Activated CD4-positive, alpha-beta T cell treated with anti-CD3 and anti-CD28 coated beads, Interleukin-2, amount 10 ng/mL, durations not matched to agents 24 days and 14 days (primary cell): ENCODE measurements at regions of chr17 and their contacts with region 1.

Region 1: DNA sequence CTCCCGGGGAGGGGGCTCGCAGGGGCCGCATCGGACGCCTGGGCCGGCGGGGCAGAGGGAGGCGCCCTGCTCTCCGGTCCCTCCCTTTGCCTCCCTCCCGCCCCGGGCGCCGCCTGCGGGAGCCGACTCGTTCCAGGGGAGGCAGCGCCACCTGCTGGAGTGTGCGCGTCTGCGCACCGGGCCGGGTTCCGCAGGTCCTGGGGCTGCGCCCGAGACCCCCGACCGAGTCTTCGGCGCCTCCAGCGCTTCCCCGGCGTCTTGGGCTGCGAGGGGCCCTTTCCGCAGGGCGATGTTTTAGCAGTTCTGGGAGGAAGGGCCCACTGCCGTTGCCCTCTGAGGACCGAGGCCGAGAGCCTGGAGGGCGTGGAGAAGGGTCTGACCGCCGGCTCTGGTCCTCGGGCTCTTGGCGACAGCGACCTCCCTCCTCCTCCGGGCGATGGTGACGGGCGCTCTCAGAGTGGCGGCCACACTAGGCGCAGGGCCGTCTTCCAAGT is 106.3 kb downstream of the SEC14L1 start:
- DNase-seq: peak; percentile 96
- H3K4me3 Mint-ChIP-seq: peak overlapping the region; percentile 58
- H3K27ac Mint-ChIP-seq: no peak overlapping the region
- H3K4me1 Mint-ChIP-seq: peaks cover 18% of the 10 kb centered on the region
- H3K27me3 Mint-ChIP-seq: peaks cover 23% of the 10 kb centered on the region

Region 2: DNA sequence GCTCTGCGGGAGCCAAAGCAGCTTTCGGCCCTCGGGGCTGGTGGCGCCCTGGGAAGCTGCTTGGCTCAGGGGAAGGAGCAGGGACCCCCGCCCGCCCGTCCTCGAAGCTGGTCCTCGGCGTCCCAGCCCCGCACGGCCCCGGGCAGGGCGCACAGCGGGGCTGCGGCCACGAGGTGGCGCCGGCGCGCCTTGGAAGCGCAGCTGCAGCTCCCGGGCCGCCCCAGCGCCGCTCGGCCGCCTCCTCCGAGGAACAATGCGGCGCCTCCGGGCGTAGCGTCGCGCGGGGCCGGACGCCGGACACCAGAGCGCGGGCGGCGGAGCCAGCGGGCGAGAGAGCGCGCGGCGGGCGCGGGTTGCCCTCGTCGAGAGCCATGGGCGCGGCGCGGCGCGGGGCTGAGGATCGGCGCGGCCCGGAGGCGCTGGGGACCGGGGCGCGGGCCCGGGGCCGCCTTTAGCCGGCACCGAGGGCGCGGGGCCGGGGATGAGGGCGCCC is 378.9 kb before region 1 on chr17 and contains the start of gene MGAT5B:
- intact Hi-C with region 1: loop called (anchors 5 kb)
- DNase-seq: peak; percentile 95
- H3K4me3 Mint-ChIP-seq: peak within 1 kb of the TSS; percentile 74
- H3K27ac Mint-ChIP-seq: no peak within 1 kb of the TSS
- H3K4me1 Mint-ChIP-seq: peaks cover 12% of the 10 kb centered on the region
- H3K27me3 Mint-ChIP-seq: peaks cover 32% of the 10 kb centered on the region
- total RNA-seq, gene MGAT5B: 0.21 and 0.51 TPM in 2 replicates

Region 3: DNA sequence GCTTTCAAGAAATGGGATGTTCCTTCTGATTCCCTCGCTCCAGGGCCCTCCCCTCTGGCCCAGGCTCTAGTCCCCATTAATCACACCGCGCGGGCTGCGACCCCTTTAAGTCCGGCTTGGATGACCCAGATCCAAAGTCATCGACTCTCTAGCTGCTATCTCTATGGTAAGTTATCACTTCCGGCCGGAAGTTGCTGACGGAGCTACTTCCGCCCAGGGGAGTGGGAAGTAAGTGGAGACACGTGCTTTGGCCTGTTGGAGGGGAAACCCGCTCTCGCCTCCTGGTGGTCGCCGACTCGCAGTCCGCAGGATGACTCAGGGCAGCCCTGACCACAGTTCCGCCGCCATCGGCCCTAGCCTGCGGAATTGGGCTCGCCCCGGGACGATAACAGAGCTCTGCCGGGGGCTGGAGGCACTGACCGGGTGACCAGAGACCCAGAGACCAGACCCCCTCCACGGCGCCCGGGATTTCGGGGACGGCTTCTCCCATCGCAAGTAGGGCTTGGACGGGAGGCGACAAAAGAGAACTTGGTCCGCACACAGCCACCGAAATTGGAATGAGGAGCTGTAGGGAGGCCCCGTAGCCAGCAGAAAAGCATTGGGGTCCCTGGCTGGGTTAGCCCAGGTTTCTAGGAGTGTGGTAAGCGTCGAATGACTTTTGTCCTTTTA is 158.5 kb before region 1 on chr17:
- intact Hi-C with region 1: loop called (anchors 1 kb)
- DNase-seq: peak; percentile 97
- H3K4me3 Mint-ChIP-seq: peak overlapping the region; percentile 93
- H3K27ac Mint-ChIP-seq: peak overlapping the region; percentile 97
- H3K4me1 Mint-ChIP-seq: peaks cover 44% of the 10 kb centered on the region
- H3K27me3 Mint-ChIP-seq: no peaks in the 10 kb centered on the region

Region 4: DNA sequence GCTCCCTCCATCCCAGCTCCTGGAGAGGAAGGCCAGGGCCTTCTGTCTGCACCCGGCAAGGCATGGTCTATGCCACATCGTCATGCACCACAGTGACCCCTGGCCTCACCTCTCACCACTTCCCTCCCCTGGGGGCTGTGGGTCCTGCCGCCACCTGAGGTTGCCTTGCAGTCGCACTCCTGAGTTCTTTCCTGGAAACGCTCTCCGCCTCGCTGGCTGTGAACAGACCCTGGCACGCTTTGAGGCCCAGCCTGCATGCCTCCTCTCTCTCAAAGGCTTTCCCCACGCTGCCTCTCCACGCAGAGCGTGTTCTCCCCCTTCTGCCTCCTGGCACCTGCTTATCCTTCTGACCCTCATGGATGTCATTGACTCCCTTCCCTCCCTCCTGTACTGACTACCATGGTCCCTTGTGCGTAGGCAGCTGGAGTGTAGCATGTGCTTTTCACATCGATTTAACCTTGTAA is 60.9 kb before region 1 on chr17:
- intact Hi-C with region 1: loop called (anchors 5 kb)
- DNase-seq: peak; percentile 75
- H3K4me3 Mint-ChIP-seq: no peak overlapping the region
- H3K27ac Mint-ChIP-seq: no peak overlapping the region
- H3K4me1 Mint-ChIP-seq: peaks cover 54% of the 10 kb centered on the region
- H3K27me3 Mint-ChIP-seq: no peaks in the 10 kb centered on the region

Region 5: DNA sequence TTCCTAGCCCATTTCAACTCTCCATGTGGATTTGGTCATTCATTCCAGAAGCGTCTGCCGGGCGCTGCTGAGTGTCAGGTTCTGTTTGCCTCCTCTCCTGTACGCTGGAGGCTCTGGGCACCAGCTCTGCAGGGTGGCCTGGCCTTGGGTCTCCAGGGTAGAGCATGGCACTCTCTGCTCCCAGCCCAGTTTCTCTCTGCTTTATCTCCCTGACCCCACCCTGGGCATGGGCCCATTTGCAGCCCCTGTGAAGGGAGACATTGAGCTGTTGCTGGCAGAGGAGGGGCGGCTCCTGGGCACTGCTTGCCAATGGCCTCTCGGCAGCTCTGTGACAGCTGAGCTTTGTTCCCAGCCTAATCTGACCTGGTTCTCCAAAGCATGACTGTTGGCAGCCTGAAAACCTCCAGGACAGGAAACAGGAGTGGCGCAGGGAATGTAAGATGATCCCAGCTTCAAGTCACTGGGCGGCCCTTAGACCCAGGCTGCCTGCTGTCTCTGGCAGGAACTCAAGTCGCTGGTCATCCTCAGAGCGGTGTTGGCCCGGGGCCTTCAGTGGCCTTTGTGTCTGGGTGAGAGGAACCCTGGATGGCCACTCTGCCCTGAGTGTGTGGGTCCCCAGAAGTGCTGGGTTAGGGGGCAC is 40.5 kb after region 1 on chr17:
- intact Hi-C with region 1: no loop called
- DNase-seq: no peak
- H3K4me3 Mint-ChIP-seq: no peak overlapping the region
- H3K27ac Mint-ChIP-seq: no peak overlapping the region
- H3K4me1 Mint-ChIP-seq: peaks cover 7% of the 10 kb centered on the region
- H3K27me3 Mint-ChIP-seq: peaks cover 15% of the 10 kb centered on the region